ENCODE measurements at regions of chr6 and their contacts with region 1.

Region 1: DNA sequence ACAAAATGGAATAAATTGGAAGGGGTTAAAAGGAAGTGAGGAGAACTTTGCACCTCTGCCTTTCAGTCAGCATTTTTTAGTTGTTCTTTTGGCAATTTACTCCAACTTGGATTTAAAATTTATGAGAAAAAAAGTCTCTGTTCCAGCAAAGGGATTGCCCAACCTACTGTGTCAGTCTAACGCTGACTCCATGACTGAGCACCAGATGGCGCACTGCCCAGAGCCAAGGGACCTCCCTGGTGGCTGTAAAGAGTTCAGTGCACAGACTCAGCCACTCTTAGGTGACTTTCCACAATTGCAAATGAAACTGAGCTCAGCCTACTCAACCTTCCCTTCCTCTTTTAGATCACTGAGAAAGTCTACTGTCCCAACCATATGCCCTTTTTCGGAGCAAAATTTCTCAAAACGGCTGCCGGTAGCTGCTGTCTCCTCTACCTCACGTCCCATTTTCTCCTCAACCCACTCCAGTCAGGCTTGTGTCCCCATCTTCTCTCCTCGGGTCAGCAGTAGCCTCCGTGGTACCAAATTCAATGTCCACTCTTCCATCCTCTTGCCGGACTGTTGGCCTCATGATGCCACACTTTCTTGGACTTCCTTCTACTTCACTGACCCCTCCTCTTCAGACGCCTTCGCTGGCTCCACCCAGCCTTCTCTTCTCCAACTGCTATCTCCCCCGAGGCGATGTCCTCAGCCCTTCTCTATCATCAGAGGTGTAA is 38.7 kb downstream of the GSTA2 start:
- H3K4me3 ChIP-seq: no peak overlapping the region
- H3K27ac ChIP-seq: no peak overlapping the region
- H3K4me1 ChIP-seq: peaks cover 4% of the 10 kb centered on the region; the same call in 1 of the 2 replicates
- CTCF ChIP-seq: peak; percentile 69; the same call in 1 of the 2 replicates

Region 2: DNA sequence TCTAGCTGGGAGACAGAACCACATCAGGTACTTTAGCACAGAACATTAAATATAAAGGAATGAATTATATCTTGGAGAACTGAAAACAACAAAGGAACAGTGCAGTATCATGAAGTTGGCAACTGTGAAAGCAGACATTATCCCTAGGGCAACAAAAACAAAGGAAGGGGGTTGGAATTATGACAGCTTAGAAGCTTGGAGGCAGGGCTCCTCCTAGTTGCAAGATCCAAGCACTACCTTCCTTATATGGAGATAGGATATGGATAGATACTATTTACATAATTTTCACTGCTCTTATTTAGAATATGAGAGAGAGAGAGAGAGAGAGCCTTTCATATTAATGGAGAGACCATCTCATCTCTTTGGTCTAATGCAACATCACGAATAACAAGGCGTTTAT is 26.7 kb before region 1 on chr6:
- CTCF ChIA-PET with region 1: interaction called, 11 read pairs
- POLR2A ChIA-PET with region 1: no interaction called
- H3K4me3 ChIP-seq: no peak overlapping the region
- H3K27ac ChIP-seq: no peak overlapping the region
- H3K4me1 ChIP-seq: no peaks in the 10 kb centered on the region
- CTCF ChIP-seq: no peak

Region 3: DNA sequence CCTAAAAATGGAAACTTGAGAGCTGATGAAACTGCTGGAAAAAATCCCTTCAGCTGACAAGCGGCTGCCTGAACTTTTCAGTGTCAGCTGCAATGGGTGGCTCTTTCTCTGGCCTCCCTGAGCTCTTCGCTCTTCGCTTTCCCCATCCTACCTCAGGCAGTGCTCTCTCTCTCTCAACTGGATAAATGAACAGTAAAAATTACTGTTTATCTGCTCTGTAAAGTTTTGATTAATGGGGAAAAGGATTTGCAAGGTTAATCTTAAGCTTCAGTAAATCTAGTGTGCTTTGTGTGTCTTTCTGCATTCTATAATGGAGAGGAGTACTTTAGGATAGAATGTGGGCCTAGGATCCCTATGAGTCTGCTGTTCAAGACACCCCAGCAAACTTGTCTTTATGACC is 18.6 kb before region 1 on chr6:
- CTCF ChIA-PET with region 1: interaction called, 18 read pairs
- POLR2A ChIA-PET with region 1: no interaction called
- H3K4me3 ChIP-seq: no peak overlapping the region
- H3K27ac ChIP-seq: no peak overlapping the region
- H3K4me1 ChIP-seq: no peaks in the 10 kb centered on the region
- CTCF ChIP-seq: no peak

Region 4: DNA sequence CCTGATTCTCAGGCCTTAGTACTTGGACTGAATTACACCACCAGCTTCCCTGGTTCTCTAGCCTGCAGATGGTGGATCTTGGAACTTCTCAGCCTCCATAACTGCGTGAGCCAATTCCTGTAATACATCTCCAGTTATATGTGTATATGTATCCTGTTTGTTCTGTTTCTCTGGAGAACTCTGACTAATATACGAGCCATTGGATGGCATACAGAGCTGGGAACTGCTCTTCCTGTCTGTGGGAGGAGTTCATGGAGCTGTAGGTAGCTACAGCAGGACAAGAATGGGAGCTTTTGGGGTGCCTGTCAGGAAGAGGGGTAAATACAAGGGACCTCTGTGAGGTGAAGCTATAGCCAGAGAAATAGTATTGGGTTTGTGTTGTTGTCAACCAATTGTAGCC is 12.4 kb before region 1 on chr6:
- CTCF ChIA-PET with region 1: interaction called, 18 read pairs
- POLR2A ChIA-PET with region 1: no interaction called
- H3K4me3 ChIP-seq: no peak overlapping the region
- H3K27ac ChIP-seq: no peak overlapping the region
- H3K4me1 ChIP-seq: no peaks in the 10 kb centered on the region
- CTCF ChIP-seq: no peak